ENCODE measurements at regions of chr12 and their contacts with region 1.

Region 1: DNA sequence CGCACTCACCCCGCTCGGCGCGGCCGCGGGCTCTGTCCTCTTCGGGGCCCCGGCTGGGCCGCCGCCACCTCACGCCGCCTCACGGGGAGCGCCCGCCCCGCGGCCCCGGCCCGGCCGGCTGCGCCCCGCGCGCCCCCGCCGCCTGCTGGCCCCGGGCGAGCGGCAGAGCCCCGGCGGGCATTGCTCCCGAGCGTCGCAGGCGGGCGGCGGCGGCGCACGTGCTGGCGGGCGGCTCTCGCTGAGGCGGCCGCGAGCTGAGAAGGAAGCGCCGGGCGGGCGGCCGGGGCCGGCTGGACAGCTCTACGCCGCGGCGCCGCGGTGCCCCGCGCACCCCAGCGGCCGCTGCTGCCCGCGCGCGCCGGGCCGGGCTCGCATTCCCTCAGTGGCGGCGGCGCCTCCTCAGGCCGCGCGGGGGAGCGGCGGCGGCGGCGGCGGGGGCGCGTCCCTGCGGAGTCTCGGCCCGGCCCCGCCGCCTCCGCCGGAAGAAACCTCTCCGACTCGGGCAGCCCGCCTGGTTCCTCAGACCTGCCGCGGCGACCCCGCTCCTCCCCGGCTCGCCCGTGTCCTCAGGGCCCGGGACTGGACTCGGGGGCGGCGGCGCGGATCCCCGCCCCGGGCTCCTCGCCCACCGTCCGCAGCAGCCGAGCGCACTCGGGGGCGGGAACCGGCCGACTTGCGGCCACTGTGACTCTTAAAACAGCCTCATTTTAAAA is at the start of gene PITPNM2:
- DNase-seq: peak; percentile 63
- H3K4me3 Mint-ChIP-seq: peak within 1 kb of the TSS; percentile 77
- H3K27ac Mint-ChIP-seq: peak within 1 kb of the TSS; percentile 75
- H3K4me1 Mint-ChIP-seq: peaks cover 29% of the 10 kb centered on the region
- H3K27me3 Mint-ChIP-seq: no peaks in the 10 kb centered on the region
- total RNA-seq, gene PITPNM2: 15.4 TPM

Region 2: DNA sequence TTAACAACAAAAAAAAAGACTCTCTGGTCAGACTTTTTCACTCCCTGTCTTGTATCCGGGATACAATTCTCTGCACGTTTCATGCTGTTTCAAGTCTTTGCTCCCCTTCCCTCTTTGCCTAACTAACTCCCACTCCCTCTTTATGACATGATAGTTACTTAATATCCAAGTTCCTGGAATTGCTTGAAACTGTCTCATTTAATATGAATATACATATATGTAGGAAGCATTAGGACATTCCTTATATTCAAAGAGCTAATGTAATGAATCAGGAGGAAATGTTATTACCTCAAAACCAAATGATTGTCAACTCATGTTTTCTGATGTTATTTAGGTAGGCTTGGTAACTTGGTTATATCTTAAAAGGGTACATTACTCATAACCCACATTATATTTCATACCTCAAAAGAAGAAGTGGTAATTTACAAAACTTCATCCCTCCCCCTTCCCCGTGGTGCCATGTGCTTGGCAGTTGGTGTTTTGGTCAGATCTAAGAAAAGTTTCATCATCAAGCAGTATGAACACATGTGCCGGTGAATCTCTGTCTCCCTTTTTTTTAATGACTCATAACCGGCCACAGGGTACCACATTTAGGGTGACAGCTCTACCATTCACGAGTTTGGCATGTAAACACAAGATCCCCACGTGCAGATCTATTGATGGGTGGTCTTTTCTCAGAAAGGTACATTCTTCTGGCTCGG is 504.2 kb before region 1 on chr12:
- CTCF ChIA-PET with region 1: no interaction called
- intact Hi-C with region 1: no loop called
- DNase-seq: peak; percentile 81
- H3K4me3 Mint-ChIP-seq: peak overlapping the region; percentile 44
- H3K27ac Mint-ChIP-seq: peak overlapping the region; percentile 63
- H3K4me1 Mint-ChIP-seq: peaks cover 14% of the 10 kb centered on the region
- H3K27me3 Mint-ChIP-seq: no peaks in the 10 kb centered on the region

Region 3: GRCh38 chr12:123200414-123200813 is 49.5 kb after region 1 on chr12:
- CTCF ChIA-PET with region 1: interaction called, 3 read pairs
- intact Hi-C with region 1: loop called (anchors 1 kb)
- DNase-seq: peak; percentile 48
- H3K4me3 Mint-ChIP-seq: no peak overlapping the region
- H3K27ac Mint-ChIP-seq: peak overlapping the region; percentile 79
- H3K4me1 Mint-ChIP-seq: peaks cover 19% of the 10 kb centered on the region
- H3K27me3 Mint-ChIP-seq: no peaks in the 10 kb centered on the region

Measured in activated naive CD4-positive, alpha-beta T cell treated with anti-CD3 and anti-CD28 coated beads for 36 hours (primary cell).